ENCODE measurements at regions of chr12 and their contacts with region 1.

Region 1: GRCh38 chr12:12356886-12357718 is at the start of gene BORCS5:
- DNase-seq: peak; percentile 99
- ATAC-seq: peak; percentile 88
- H3K4me3 Mint-ChIP-seq: peak within 1 kb of the TSS; percentile 92
- H3K27ac Mint-ChIP-seq: peak within 1 kb of the TSS; percentile 97
- H3K4me1 Mint-ChIP-seq: peaks cover 42% of the 10 kb centered on the region
- H3K27me3 Mint-ChIP-seq: no peaks in the 10 kb centered on the region
- total RNA-seq, gene BORCS5: 20.1 to 21.8 TPM

Region 2: DNA sequence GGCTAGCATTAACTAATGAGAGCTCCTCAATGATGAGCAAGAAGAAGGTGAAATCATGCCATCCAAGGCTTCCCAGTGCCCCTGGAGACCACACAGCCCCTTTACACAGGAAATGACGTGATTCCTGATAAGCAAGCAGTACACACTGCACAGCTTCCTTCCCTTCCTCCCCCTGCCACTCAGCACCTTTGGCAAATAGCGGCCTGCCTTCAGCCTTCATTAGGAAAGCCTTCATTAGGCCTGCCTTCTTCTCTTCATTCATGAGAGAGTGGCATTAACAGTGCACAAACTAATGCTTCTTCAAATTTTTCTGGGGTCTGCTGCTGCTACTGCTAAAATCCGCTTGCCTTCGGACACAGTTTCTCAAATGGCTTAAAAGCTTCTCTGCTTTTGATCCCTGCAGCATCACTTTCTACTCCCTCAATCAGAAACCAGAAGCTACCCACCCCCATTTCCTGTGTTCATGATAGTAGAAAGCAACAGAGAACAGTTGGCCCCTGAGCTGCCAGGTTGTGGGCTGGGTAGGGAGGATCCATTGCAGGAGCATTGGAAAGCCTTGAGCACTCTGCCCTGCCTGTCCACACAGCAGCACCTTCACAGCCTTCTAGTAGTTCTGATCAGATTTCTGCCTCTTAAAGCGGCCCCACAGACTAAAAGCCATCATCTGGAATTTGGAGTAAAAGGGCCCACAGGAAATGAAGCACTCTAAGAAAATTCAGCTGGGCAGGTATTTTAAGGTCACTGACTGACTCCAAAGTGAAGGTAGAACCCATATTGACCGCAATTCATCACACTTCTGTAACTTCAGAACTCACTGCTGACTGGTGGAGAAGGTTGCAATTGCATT is 811.4 kb before region 1 on chr12:
- POLR2A ChIA-PET with region 1: interaction called, 12 read pairs
- DNase-seq: peak; percentile 70
- ATAC-seq: peak; percentile 82
- H3K4me3 Mint-ChIP-seq: peak overlapping the region; percentile 73
- H3K27ac Mint-ChIP-seq: peak overlapping the region; percentile 96
- H3K4me1 Mint-ChIP-seq: peaks cover 44% of the 10 kb centered on the region
- H3K27me3 Mint-ChIP-seq: no peaks in the 10 kb centered on the region

Region 3: GRCh38 chr12:12224240-12224940 is 132.7 kb before region 1 on chr12:
- POLR2A ChIA-PET with region 1: no interaction called
- DNase-seq: no peak
- ATAC-seq: no peak
- H3K4me3 Mint-ChIP-seq: no peak overlapping the region
- H3K27ac Mint-ChIP-seq: no peak overlapping the region
- H3K4me1 Mint-ChIP-seq: no peaks in the 10 kb centered on the region
- H3K27me3 Mint-ChIP-seq: peaks cover 40% of the 10 kb centered on the region

Region 4: DNA sequence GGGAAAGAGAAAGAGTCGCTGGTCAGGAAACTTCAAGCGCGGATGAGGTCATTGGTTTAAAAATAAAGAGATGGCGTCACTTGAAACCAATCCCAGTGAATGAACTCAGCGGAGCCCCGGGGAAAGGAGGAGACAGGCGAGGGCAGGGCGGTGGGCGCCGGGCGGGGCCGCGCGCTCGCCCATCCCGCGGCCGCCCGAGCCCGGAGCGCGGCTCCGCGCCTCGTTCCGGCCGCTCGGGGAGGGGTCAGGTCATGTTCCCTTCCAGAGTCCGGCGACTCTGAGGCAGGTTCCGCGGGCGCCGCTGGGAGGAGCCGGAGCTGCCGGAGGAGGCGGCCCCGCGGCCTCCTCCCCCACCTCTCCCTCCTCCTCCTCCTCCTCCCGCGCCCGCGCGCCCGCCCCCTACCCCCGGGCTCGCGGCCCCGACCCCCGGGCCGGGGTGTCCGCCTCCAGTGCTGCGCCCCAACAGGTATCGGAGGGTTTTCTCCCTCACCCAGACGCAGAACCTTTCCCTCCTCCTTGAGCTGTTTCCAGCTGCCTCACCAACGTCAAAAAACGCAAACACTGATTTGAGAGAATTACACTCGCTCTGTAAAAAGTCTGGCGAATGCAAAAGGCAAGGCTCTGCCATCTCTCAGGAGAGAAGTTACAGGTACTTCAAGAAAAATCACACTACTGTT is 205.6 kb after region 1 on chr12 and contains the start of gene DUSP16:
- POLR2A ChIA-PET with region 1: interaction called, 19 read pairs
- DNase-seq: peak; percentile 86
- ATAC-seq: peak; percentile 88
- H3K4me3 Mint-ChIP-seq: peak within 1 kb of the TSS; percentile 84
- H3K27ac Mint-ChIP-seq: peak within 1 kb of the TSS; percentile 94
- H3K4me1 Mint-ChIP-seq: peaks cover 14% of the 10 kb centered on the region
- H3K27me3 Mint-ChIP-seq: no peaks in the 10 kb centered on the region
- total RNA-seq, gene DUSP16: 32.2 to 38.1 TPM

Region 5: DNA sequence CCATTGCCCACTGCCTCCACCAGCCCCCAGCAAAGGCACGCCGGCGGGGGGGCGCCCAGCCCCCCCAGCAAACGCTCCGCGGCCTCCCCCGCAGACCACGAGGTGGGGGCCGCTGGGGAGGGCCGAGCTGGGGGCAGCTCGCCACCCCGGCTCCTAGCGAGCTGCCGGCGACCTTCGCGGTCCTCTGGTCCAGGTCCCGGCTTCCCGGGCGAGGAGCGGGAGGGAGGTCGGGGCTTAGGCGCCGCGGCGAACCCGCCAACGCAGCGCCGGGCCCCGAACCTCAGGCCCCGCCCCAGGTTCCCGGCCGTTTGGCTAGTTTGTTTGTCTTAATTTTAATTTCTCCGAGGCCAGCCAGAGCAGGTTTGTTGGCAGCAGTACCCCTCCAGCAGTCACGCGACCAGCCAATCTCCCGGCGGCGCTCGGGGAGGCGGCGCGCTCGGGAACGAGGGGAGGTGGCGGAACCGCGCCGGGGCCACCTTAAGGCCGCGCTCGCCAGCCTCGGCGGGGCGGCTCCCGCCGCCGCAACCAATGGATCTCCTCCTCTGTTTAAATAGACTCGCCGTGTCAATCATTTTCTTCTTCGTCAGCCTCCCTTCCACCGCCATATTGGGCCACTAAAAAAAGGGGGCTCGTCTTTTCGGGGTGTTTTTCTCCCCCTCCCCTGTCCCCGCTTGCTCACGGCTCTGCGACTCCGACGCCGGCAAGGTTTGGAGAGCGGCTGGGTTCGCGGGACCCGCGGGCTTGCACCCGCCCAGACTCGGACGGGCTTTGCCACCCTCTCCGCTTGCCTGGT is 359.9 kb after region 1 on chr12 and contains the start of gene CDKN1B:
- POLR2A ChIA-PET with region 1: interaction called, 77 read pairs
- DNase-seq: peak; percentile 88
- ATAC-seq: peak; percentile 55
- H3K4me3 Mint-ChIP-seq: peak within 1 kb of the TSS; percentile 96
- H3K27ac Mint-ChIP-seq: peak within 1 kb of the TSS; percentile 98
- H3K4me1 Mint-ChIP-seq: peaks cover 41% of the 10 kb centered on the region
- H3K27me3 Mint-ChIP-seq: no peaks in the 10 kb centered on the region
- total RNA-seq, gene CDKN1B: 135 to 136 TPM

Region 6: DNA sequence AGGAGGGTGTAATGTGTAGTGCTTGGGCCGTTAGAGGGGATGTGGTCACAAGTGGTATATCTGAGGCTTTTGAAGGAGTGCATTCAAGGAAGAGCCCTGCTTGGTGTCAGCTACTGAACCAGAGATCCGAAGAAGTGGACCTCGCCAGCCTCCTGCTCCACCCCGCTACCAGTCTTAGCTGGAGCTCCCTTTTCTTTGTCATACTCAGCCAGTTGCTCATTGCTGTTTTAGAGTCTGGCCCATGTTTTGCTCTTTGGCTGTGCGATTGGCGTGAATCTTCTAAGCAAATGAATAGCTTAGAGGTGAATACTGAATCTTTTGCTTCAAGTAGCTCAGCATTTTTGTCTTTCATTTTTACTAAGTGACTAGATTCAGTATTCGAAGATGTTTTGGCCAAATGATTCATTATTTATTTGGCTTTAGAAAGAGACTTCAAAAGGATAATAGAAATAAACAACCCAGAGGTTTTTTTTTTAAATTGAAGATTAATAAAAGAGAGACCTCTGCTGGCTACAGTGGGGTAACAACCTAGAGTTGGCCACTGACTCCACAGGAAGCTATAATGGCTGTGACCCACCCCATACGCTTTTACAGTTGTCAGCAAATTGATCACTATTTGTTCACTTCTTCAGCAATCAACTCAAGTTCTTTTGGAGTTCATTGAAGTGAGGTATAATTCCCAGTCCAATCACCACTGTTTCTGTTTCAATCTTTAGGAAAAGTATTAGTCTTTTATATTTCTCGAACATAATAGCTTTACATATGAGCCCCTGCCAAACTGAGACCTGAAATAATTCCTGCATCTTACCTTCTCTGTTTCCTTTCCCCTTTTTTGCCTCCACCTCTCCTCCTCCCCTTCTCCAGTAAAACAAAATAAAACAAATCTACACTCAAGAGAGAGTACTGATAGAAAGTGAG is 379.9 kb after region 1 on chr12:
- POLR2A ChIA-PET with region 1: interaction called, 33 read pairs
- DNase-seq: peak; percentile 61
- ATAC-seq: peak; percentile 95
- H3K4me3 Mint-ChIP-seq: peak overlapping the region; percentile 77
- H3K27ac Mint-ChIP-seq: peak overlapping the region; percentile 93
- H3K4me1 Mint-ChIP-seq: peaks cover 55% of the 10 kb centered on the region
- H3K27me3 Mint-ChIP-seq: no peaks in the 10 kb centered on the region

Measured in activated naive CD8-positive, alpha-beta T cell treated with anti-CD3 and anti-CD28 coated beads, Interleukin-2, amount 10 ng/mL, durations not matched to agents 7 days and 5 days (primary cell).